GM12878 (cell line): ENCODE measurements at regions of chr3 and their contacts with region 1.

Region 1: DNA sequence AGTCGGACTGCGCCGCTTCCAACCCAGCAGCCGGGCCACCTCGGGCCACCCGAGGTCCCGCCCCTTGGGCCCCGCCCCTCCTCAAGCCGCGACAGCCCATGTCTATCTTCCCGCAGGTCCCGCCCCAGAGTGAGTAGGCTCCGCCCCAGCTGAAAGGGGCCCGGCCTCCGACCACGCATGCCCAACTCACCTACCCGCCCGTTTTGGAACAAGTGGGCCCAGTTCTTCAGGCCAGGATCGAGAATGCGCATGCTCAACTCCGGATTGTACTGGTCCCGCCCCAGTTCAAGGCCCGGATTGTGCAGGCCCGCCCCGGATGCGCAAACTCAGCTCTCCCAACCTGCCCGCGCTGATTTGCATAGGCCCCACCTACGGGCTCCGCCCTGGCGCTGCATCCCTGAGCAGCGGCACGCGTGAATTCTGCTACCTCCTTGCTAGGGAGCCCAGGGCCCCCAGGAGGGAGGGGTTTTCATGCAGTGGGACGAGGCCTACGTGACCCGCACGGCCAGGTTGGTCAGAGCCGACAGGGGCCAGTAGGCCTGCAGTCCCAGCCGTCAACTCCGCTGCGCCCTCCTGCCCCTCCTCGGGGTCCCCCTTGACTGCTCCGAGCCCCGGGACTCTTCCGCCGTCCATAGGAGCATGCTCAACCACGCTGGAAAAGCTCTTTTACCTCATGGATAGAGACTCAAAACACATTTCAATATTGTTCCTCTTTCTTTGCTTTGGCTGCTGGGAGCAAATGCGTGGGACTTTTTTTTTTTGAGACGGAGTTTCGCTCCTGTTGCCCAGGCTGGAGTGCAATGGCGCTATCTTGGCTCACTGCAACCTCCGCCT is at the start of gene PFKFB4:
- DNase-seq: peak; percentile 99
- ATAC-seq: peak; percentile 93
- H3K4me3 ChIP-seq: peak within 1 kb of the TSS; percentile 91
- H3K27ac ChIP-seq: peak within 1 kb of the TSS; percentile 78
- H3K4me1 ChIP-seq: peaks cover 47% of the 10 kb centered on the region
- H3K27me3 ChIP-seq: no peaks in the 10 kb centered on the region
- CTCF ChIP-seq: peak in 1 of 3 experiments; percentile 11; a peak in 2 of 6 replicates
- EP300 ChIP-seq: no peak; a peak in 1 of 4 replicates
- POLR2A ChIP-seq: peak; percentile 77
- RAD21 ChIP-seq: no peak
- polyA plus RNA-seq, gene PFKFB4: 0.37 to 0.53 TPM

Region 2: DNA sequence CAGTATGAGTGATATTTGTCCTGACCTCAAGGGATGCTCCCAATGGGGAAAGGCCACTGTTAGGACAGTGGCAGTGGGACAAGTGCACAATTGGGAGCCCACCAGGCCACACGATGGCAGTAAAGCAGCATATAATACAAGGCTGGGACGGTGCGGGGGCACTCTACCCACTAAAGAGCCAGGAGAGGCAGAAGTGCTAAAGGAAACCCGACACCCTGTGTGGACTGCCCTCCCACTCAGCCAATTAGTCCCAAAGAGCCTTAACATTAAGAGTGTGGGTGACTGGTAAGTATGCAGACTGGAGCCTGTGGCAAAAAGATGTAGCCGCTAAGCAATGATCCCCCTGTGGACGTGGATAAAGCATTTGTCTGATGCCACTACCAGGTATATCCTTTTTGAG is 324.3 kb before region 1 on chr3:
- CTCF ChIA-PET with region 1: interaction called, 3 read pairs
- POLR2A ChIA-PET with region 1: no interaction called
- RAD21 ChIA-PET with region 1: interaction called, 3 read pairs
- SMC1A ChIA-PET with region 1: interaction called, 4 read pairs
- in situ Hi-C with region 1: no loop called
- intact Hi-C with region 1: loop called (anchors 5 kb)
- DNase-seq: peak; percentile 63
- ATAC-seq: peak; percentile 100
- H3K4me3 ChIP-seq: peak overlapping the region; percentile 6; the same call in 1 of the 2 replicates
- H3K27ac ChIP-seq: peak overlapping the region; percentile 24; the same call in 1 of the 2 replicates
- H3K4me1 ChIP-seq: peaks cover 39% of the 10 kb centered on the region
- H3K27me3 ChIP-seq: no peaks in the 10 kb centered on the region
- CTCF ChIP-seq: peak; percentile 63 to 90 (median 85)
- EP300 ChIP-seq: no peak
- POLR2A ChIP-seq: no peak
- RAD21 ChIP-seq: peak; percentile 68

Region 3: DNA sequence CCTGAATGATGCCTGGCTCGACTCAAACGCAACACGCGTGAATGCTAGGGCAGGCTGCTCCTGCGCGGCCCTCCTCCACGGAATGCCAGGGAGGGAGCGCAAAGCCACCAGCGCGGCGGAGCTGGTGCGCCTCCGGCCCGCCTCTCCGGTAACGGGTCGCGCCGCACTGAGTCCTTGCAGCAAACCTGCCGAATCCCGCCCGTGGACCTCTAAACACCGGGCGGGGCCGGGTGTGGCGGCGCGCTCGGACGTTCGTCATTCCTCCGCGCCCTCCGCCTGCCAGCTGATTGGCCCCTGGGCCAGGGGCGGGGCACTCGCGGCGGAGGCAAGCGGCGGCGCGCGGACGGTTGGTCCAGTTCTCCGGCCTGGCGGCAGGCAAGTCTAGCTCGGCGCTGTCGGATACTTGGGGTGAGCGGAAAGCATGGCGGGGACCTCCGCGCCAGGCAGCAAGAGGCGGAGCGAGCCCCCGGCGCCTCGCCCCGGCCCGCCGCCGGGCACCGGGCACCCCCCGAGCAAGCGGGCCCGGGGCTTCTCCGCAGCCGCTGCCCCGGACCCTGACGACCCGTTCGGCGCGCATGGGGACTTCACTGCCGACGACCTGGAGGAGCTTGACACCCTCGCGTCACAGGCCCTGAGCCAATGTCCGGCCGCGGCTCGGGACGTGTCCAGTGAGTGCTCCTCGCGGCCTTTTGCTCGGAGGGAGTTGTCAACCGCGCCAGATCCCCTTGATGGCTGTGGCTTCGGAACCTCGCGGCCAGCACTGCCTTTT is 110.4 kb before region 1 on chr3 and contains the start of gene ATRIP:
- CTCF ChIA-PET with region 1: interaction called, 239 read pairs
- POLR2A ChIA-PET with region 1: no interaction called
- RAD21 ChIA-PET with region 1: interaction called, 20 read pairs
- SMC1A ChIA-PET with region 1: interaction called, 3 read pairs
- in situ Hi-C with region 1: no loop called
- intact Hi-C with region 1: loop called (anchors 5 kb)
- DNase-seq: no peak
- ATAC-seq: peak; percentile 96
- H3K4me3 ChIP-seq: peak within 1 kb of the TSS; percentile 74
- H3K27ac ChIP-seq: peak within 1 kb of the TSS; percentile 72
- H3K4me1 ChIP-seq: peaks cover 13% of the 10 kb centered on the region
- H3K27me3 ChIP-seq: no peaks in the 10 kb centered on the region
- CTCF ChIP-seq: no peak
- EP300 ChIP-seq: no peak
- POLR2A ChIP-seq: peak; percentile 98
- RAD21 ChIP-seq: no peak
- polyA plus RNA-seq, gene ATRIP: 1.4 to 2.4 TPM

Region 4: GRCh38 chr3:48472915-48473616 is 83.9 kb before region 1 on chr3:
- CTCF ChIA-PET with region 1: interaction called, 13 read pairs
- POLR2A ChIA-PET with region 1: interaction called, 91 read pairs
- RAD21 ChIA-PET with region 1: interaction called, 23 read pairs
- SMC1A ChIA-PET with region 1: interaction called, 22 read pairs
- in situ Hi-C with region 1: no loop called
- intact Hi-C with region 1: no loop called
- DNase-seq: peak; percentile 96
- ATAC-seq: peak; percentile 91
- H3K4me3 ChIP-seq: peak overlapping the region; percentile 71
- H3K27ac ChIP-seq: peak overlapping the region; percentile 100
- H3K4me1 ChIP-seq: peaks cover 31% of the 10 kb centered on the region
- H3K27me3 ChIP-seq: no peaks in the 10 kb centered on the region
- CTCF ChIP-seq: peak; percentile 35 to 55 (median 54); a peak in 5 of 6 replicates
- EP300 ChIP-seq: peak; percentile 59 to 64; a peak in 2 of 4 replicates
- POLR2A ChIP-seq: peak; percentile 88
- RAD21 ChIP-seq: no peak

Region 5: GRCh38 chr3:48573973-48574585 is 17.1 kb after region 1 on chr3:
- CTCF ChIA-PET with region 1: no interaction called
- POLR2A ChIA-PET with region 1: no interaction called
- RAD21 ChIA-PET with region 1: no interaction called
- SMC1A ChIA-PET with region 1: no interaction called
- in situ Hi-C with region 1: no loop called
- intact Hi-C with region 1: no loop called
- DNase-seq: no peak
- ATAC-seq: no peak
- H3K4me3 ChIP-seq: no peak overlapping the region
- H3K27ac ChIP-seq: no peak overlapping the region
- H3K4me1 ChIP-seq: no peaks in the 10 kb centered on the region
- H3K27me3 ChIP-seq: no peaks in the 10 kb centered on the region
- CTCF ChIP-seq: no peak
- EP300 ChIP-seq: no peak
- POLR2A ChIP-seq: no peak
- RAD21 ChIP-seq: no peak

Region 6: DNA sequence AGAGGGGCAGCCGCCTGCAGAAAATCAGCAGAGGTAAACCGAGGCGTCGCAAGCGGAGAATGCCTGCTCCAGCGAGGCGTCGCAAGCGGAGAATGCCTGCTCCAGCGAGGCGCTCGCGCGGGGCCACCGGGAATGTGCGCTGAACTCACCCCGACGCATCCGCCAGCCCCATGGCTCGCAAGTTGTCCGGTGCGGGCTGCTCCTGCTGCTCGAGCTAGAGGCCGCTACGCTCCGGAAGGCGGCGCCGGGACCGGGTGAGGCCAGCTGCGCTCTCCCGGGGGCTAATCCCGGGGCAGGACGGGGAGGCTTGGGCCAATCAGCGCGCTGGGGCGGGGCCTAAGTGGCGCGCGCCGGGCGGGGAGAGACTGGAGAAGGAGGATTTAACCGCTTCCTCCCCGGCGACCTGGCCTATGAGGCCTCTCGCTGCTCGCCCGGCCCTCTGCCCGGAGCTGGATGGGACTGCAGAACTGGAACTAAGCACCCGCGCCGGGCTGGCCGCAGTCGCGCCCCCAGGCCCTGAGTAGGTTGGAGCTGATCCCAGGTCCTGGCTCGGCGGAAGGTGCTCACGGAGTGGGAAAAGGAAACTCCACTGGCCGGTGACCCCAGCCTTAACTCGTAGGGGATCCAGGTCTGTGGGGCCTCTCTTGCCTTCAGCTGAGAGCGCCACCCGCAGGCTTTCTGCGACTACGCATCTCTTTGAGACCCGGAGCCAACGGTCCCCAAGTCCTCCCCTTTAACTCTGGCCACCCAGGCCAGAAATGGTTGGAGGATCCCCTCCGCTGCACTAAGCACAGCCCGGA is 78.4 kb after region 1 on chr3 and contains the start of gene SLC26A6:
- CTCF ChIA-PET with region 1: interaction called, 48 read pairs
- POLR2A ChIA-PET with region 1: interaction called, 7 read pairs
- RAD21 ChIA-PET with region 1: interaction called, 32 read pairs
- SMC1A ChIA-PET with region 1: interaction called, 6 read pairs
- in situ Hi-C with region 1: no loop called
- intact Hi-C with region 1: no loop called
- DNase-seq: peak; percentile 77
- ATAC-seq: peak; percentile 96
- H3K4me3 ChIP-seq: peak within 1 kb of the TSS; percentile 77
- H3K27ac ChIP-seq: peak within 1 kb of the TSS; percentile 57
- H3K4me1 ChIP-seq: peaks cover 11% of the 10 kb centered on the region; the same call in 1 of the 2 replicates
- H3K27me3 ChIP-seq: no peaks in the 10 kb centered on the region
- CTCF ChIP-seq: peak; percentile 52 to 81 (median 78)
- EP300 ChIP-seq: no peak
- POLR2A ChIP-seq: peak; percentile 77
- RAD21 ChIP-seq: peak; percentile 43
- polyA plus RNA-seq, gene SLC26A6: 2.1 to 2.9 TPM